ENCODE measurements at regions of chr11 and their contacts with region 1.

Region 1: DNA sequence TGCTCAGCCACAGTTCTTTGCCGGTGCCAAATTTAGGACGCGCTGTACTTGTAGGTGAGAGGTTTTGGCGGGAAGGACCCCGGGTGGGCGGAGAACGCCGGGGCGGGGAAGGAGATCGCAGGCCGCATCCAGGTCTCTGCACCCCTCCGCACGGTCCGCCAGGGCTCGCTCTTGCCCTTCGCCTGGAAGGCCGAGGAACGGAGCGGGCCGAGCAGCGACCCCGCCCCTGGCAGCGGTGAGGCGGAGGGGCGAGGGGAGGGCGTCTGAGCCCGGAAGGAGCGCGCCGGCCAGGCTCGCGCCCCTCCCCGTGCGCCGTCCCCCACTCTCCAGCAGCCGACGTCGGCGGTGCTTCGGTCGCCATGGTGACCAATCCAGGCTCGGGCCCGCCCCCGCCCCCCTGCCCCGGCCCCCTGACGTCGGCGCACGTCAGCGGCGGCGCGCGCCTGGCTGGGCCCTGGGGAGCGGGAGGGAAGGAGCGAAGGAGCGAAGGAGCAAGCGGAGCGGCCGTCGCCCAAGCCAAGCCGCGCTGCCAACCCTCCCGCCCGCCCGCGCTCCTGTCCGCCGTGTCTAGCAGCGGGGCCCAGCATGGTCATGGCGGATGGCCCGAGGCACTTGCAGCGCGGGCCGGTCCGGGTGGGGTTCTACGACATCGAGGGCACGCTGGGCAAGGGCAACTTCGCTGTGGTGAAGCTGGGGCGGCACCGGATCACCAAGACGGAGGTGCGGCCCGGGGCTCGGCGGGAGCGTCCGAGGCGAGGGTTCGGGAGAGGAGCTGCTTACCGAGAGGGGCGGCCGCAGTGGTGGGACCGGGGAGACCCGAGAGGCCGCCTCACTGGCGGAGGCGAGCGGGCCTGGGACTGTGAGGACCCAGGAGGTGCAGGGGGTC is at the start of gene SIK2:
- DNase-seq: no peak
- H3K4me3 ChIP-seq: peak within 1 kb of the TSS; percentile 78
- CTCF ChIP-seq: peak; percentile 98

Region 2: DNA sequence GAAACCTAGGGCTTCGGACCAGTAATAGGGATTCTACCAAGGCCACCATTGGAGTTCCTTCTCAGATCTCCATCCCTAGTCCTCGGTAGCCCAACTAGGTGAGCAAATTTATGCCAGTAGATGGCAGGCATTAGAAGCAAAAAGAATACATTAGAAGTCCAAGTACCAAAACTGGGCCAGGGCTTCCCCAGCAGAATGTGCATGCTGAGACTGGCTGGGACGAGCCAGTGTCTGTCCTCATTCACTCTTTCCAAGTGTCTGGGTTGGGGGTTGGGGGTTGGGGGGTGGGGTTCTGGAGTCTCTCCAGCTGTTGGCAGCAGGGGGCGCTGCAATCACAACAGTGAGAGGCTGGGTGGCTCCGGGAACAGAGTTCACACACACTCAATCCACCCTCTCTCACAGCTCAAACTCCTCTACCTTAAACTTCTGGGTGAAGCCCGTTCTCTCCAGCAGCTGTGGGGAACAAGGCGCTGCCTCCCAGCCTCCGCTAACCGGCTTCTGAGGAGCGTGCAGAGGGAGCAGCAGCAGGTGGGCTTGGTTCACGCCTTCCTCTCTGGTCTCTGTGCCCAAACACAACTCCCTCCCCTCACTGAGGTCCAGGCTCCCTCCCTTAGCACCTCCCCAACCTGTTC is 147.5 kb before region 1 on chr11:
- CTCF ChIA-PET with region 1: interaction called, 17 read pairs
- POLR2A ChIA-PET with region 1: no interaction called
- DNase-seq: peak; percentile 5
- H3K4me3 ChIP-seq: no peak overlapping the region
- CTCF ChIP-seq: peak; percentile 69

Region 3: DNA sequence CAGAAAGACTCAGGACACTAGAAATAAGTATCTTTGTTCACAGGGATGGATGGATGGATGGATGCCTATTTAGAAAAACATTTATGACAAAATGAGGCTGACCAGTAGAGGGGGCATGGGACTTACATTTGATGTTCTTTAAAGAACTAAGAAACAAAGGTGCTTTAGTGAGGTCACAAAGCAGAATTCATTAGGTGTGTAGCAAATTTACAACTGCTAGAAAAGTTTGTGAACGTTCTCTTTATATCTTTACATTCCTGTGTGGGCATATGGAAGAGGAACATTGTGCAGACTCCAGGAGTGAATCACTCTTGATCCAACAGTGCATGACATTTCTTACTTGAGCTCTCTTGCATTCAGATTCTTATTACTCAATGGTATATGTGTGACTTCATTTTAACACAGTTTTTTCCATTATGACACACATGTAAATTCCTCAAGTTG is 15.8 kb before region 1 on chr11:
- CTCF ChIA-PET with region 1: interaction called, 47 read pairs
- POLR2A ChIA-PET with region 1: no interaction called
- DNase-seq: no peak
- H3K4me3 ChIP-seq: no peak overlapping the region
- CTCF ChIP-seq: peak; percentile 43

Region 4: GRCh38 chr11:111617286-111617685 is 15.1 kb after region 1 on chr11:
- CTCF ChIA-PET with region 1: interaction called, 50 read pairs
- POLR2A ChIA-PET with region 1: no interaction called
- DNase-seq: no peak
- H3K4me3 ChIP-seq: no peak overlapping the region
- CTCF ChIP-seq: no peak

Region 5: GRCh38 chr11:111718436-111718835 is 116.2 kb after region 1 on chr11:
- CTCF ChIA-PET with region 1: interaction called, 11 read pairs
- POLR2A ChIA-PET with region 1: no interaction called
- DNase-seq: no peak
- H3K4me3 ChIP-seq: no peak overlapping the region
- CTCF ChIP-seq: no peak

Region 6: GRCh38 chr11:111766093-111766833 is 164.0 kb after region 1 on chr11 and contains the start of gene PPP2R1B:
- CTCF ChIA-PET with region 1: interaction called, 137 read pairs
- POLR2A ChIA-PET with region 1: interaction called, 3 read pairs
- DNase-seq: no peak
- H3K4me3 ChIP-seq: peak within 1 kb of the TSS; percentile 95
- CTCF ChIP-seq: no peak

Region 7: DNA sequence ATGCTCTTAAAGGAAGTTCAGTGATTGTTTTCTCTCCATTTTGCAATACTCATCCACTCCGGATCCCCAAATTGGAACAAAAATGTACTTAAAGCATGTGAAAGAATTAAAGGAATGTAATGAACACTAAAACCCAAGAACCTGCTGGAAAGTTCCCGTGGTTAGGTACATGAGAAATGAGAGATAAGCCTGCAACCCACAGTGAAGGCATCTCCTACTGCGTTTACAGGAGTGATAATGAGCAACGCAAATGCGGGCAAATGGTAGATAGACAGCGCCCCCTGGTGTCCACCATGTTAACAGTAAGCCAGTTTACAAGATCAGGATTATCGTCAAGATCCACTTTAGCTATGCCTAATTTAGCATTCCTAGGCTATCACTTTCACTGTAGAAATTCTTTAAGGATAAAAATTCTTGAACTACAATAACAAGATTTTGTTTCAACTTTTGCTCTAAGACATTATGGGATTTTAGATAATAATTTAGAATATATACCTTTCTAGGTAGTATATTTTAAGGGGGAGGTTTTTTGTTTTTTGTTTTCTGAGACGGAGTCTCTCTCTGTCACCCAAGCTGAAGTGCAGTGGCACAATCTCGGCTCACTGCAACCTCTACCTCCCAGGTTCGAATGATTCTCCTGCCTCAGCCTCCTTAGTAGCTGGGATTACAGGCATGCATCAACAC is 239.3 kb after region 1 on chr11:
- CTCF ChIA-PET with region 1: interaction called, 21 read pairs
- POLR2A ChIA-PET with region 1: no interaction called
- DNase-seq: peak; percentile 96
- H3K4me3 ChIP-seq: no peak overlapping the region
- CTCF ChIP-seq: peak; percentile 78